Aorta (tissue), 5 donors: ENCODE measurements at regions of chr2 and their contacts with region 1.

Region 1: GRCh38 chr2:27016801-27017325 is 15.9 kb upstream of the TMEM214 start:
- DNase-seq: peak in 1 of 2 donors; percentile 72
- ATAC-seq: no peak
- H3K4me3 ChIP-seq: no peak overlapping the region
- H3K27ac ChIP-seq: no peak overlapping the region
- H3K4me1 ChIP-seq: no peaks in the 10 kb centered on the region
- H3K27me3 ChIP-seq: no peaks in the 10 kb centered on the region

Region 2: GRCh38 chr2:26959331-26959730 is 57.5 kb before region 1 on chr2:
- intact Hi-C with region 1: loop called (anchors 1 to 2 kb)
- DNase-seq: no peak
- ATAC-seq: no peak
- H3K4me3 ChIP-seq: no peak overlapping the region
- H3K27ac ChIP-seq: no peak overlapping the region
- H3K4me1 ChIP-seq: no peaks in the 10 kb centered on the region
- H3K27me3 ChIP-seq: no peaks in the 10 kb centered on the region

Region 3: DNA sequence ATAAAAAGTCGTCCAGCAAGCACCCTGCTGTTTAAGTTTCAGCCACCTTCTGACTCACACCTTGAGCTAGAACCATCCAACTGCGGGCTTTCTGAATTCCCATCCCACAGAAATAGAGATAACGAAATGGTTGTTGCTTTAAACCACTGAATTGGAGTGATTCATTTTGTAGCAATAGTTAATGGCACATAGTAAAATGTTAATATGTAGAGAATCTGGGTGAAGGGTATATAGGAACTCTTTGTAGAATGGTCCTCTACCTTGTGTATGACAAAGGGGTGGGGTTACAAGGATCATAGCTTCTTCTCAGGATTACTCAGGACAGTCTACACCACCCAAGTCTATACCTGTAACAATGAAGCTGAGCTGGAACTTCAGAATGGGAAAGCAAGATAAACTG is 48.9 kb before region 1 on chr2:
- intact Hi-C with region 1: loop called in 1 of 2 experiments (anchors 2 kb)
- DNase-seq: no peak
- ATAC-seq: no peak
- H3K4me3 ChIP-seq: no peak overlapping the region
- H3K27ac ChIP-seq: no peak overlapping the region
- H3K4me1 ChIP-seq: no peaks in the 10 kb centered on the region
- H3K27me3 ChIP-seq: no peaks in the 10 kb centered on the region

Region 4: DNA sequence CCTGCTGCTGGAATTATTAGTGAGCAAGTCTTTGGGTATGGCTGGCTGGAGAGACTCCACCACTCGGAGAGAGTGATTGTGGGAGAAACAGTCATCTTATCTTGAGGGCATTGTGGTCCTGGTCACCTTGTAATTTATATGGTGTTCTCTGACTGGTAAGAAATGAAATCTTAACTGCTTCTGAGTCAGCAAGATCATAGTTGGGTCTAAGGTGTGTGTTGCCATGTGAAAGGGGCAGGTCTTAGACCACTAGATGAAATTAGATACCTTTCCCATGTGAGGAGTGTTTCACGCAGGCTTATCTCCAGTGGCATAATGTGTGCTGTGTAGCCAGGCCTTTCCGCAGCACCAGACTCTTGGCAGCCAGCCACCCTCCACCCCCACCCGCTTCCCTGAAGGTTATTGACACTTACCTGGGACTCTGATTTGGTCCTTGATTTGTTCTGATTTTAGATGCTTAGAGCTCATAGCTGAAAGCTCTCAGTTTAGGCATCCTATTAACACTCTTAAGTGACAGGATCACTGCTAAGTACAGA is 38.7 kb before region 1 on chr2:
- intact Hi-C with region 1: loop called in 1 of 2 experiments (anchors 5 kb)
- DNase-seq: no peak
- ATAC-seq: no peak
- H3K4me3 ChIP-seq: no peak overlapping the region
- H3K27ac ChIP-seq: no peak overlapping the region
- H3K4me1 ChIP-seq: peaks cover 0 to 2% of the 10 kb centered on the region in 2 donors
- H3K27me3 ChIP-seq: no peaks in the 10 kb centered on the region

Region 5: GRCh38 chr2:27123302-27124231 is 106.7 kb after region 1 on chr2 and contains the start of gene ABHD1:
- intact Hi-C with region 1: no loop called
- DNase-seq: peak; percentile 78 to 86
- ATAC-seq: peak; percentile 88
- H3K4me3 ChIP-seq: peak within 1 kb of the TSS; percentile 14 to 29
- H3K27ac ChIP-seq: no peak within 1 kb of the TSS
- H3K4me1 ChIP-seq: no peaks in the 10 kb centered on the region
- H3K27me3 ChIP-seq: no peaks in the 10 kb centered on the region
- total RNA-seq, gene ABHD1: 0.90 TPM in 1 of 2 donors, not detected in the other